ENCODE measurements at regions of chr12 and their contacts with region 1.

Region 1: GRCh38 chr12:50283229-50283923 is at the start of gene LIMA1:
- DNase-seq: peak; percentile 93
- ATAC-seq: peak; percentile 98
- H3K4me3 ChIP-seq: peak within 1 kb of the TSS; percentile 61 to 86 (median 80)
- H3K4me3 Mint-ChIP-seq: peak within 1 kb of the TSS; percentile 95
- H3K27ac ChIP-seq: peak within 1 kb of the TSS; percentile 19 to 74
- H3K27ac Mint-ChIP-seq: peak within 1 kb of the TSS; percentile 83
- H3K4me1 ChIP-seq: peaks cover 11 to 18% of the 10 kb centered on the region in 2 donors
- H3K4me1 Mint-ChIP-seq: peaks cover 13% of the 10 kb centered on the region
- H3K27me3 ChIP-seq: peaks cover 0 to 8% (median 0%) of the 10 kb centered on the region in 4 experiments
- H3K27me3 Mint-ChIP-seq: peaks cover 4% of the 10 kb centered on the region
- CTCF ChIP-seq: peak; percentile 47
- total RNA-seq, gene LIMA1: 2.1 and 2.9 TPM in 2 replicates

Region 2: DNA sequence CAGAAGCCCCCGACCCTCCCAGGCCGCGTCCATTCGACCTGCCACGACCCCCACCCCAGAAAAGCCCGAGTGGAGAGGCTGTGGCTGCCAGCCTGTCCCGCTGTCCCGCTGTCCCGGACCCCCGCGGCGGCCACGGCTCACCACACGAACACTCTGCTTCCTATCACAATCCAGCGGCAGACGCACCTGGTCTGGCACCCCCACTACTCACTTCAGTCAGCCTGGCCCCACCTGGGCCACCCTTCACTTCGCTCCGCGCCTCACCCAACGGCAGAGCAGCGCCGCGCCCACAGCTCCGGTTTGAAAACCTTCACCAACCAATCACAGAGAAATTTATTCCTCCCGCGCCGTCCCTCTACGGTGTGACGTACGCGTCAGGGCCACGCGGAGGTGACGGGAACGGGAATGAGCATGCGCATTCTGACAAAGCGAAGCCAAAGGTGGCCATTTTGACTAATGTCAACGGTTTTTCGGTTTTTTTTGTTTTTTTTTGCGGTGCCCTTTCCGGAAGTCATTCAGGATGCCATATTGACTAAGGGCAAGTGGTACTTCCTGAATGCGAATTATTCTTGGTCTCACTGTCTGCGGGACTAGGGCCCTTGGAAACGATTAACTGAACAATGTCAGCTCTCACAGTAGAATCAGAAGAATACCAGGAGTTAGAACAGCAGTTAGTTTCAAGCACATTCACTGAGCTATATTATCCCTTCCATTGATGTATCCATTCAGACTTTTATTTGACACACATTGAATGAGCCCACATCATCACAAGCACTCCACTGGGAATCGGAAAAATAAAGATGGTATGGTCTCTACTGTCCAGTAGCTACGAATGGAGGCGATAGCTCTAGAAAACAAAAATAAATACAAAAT is 258.0 kb before region 1 on chr12 and contains the start of gene RACGAP1:
- CTCF ChIA-PET with region 1: no interaction called
- POLR2A ChIA-PET with region 1: no interaction called
- intact Hi-C with region 1: loop called (anchors 1 kb)
- DNase-seq: peak; percentile 99
- ATAC-seq: peak; percentile 97
- H3K4me3 ChIP-seq: peak within 1 kb of the TSS; percentile 44 to 75 (median 65)
- H3K4me3 Mint-ChIP-seq: peak within 1 kb of the TSS; percentile 94
- H3K27ac ChIP-seq: peak within 1 kb of the TSS; percentile 52 to 63
- H3K27ac Mint-ChIP-seq: peak within 1 kb of the TSS; percentile 85
- H3K4me1 ChIP-seq: peaks cover 8 to 10% of the 10 kb centered on the region in 2 donors
- H3K4me1 Mint-ChIP-seq: peaks cover 17% of the 10 kb centered on the region
- H3K27me3 ChIP-seq: no peaks in the 10 kb centered on the region
- H3K27me3 Mint-ChIP-seq: no peaks in the 10 kb centered on the region
- CTCF ChIP-seq: no peak
- total RNA-seq, gene RACGAP1: 11.3 and 14.2 TPM in 2 replicates

Region 3: GRCh38 chr12:50297027-50297426 is 13.7 kb after region 1 on chr12:
- CTCF ChIA-PET with region 1: no interaction called
- POLR2A ChIA-PET with region 1: no interaction called
- intact Hi-C with region 1: no loop called
- DNase-seq: no peak
- ATAC-seq: no peak
- H3K4me3 ChIP-seq: no peak overlapping the region
- H3K4me3 Mint-ChIP-seq: no peak overlapping the region
- H3K27ac ChIP-seq: no peak overlapping the region
- H3K27ac Mint-ChIP-seq: no peak overlapping the region
- H3K4me1 ChIP-seq: no peaks in the 10 kb centered on the region
- H3K4me1 Mint-ChIP-seq: no peaks in the 10 kb centered on the region
- H3K27me3 ChIP-seq: no peaks in the 10 kb centered on the region
- H3K27me3 Mint-ChIP-seq: no peaks in the 10 kb centered on the region
- CTCF ChIP-seq: no peak

Region 4: DNA sequence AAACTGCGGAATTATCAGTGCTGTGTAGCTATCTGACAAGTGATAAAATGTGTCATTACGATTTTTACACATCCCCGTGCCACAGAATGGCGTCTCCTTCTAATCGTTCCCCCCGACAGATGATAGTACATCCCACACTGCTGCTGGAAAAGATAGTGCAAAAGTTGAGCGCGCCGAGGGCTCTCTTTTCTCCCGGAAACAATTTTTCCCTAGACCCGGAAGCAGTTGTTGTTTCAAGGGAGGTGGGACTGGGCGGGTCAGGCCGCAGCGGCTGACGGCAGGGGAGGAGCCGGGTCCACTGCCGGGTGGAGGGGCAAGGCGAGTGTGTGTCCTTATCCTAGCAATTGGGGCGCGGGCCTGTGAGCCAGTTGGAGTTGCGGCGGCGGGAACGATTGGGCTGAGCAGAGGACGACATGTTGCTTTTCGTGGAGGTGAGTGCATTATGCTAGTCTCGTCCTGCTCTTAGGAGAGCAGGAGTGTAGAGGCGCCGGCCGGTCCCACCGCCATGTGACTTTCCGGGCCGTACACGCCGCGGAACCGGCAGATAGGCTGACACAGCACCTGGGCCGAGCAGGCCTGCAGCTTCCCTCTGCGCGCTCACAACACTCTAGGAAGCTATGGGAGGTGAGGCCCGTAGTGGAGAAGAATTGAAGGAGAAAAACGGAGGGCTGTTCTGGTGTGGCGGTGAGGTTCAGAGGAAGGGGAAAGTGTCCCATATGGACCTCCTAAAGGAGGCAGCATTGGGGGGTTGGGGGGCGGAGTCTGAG is 117.4 kb after region 1 on chr12 and contains the start of gene LARP4:
- CTCF ChIA-PET with region 1: no interaction called
- POLR2A ChIA-PET with region 1: no interaction called
- intact Hi-C with region 1: loop called (anchors 1 kb)
- DNase-seq: peak; percentile 93
- ATAC-seq: peak; percentile 94
- H3K4me3 ChIP-seq: peak within 1 kb of the TSS; percentile 53 to 90 (median 81)
- H3K4me3 Mint-ChIP-seq: peak within 1 kb of the TSS; percentile 92
- H3K27ac ChIP-seq: peak within 1 kb of the TSS; percentile 62 to 88
- H3K27ac Mint-ChIP-seq: peak within 1 kb of the TSS; percentile 93
- H3K4me1 ChIP-seq: peaks cover 22 to 24% of the 10 kb centered on the region in 2 donors
- H3K4me1 Mint-ChIP-seq: peaks cover 38% of the 10 kb centered on the region
- H3K27me3 ChIP-seq: no peaks in the 10 kb centered on the region
- H3K27me3 Mint-ChIP-seq: peaks cover 9% of the 10 kb centered on the region
- CTCF ChIP-seq: no peak
- total RNA-seq, gene LARP4: 42.0 and 48.4 TPM in 2 replicates